B cell (primary cell): ENCODE measurements at regions of chr2 and their contacts with region 1.

Region 1: DNA sequence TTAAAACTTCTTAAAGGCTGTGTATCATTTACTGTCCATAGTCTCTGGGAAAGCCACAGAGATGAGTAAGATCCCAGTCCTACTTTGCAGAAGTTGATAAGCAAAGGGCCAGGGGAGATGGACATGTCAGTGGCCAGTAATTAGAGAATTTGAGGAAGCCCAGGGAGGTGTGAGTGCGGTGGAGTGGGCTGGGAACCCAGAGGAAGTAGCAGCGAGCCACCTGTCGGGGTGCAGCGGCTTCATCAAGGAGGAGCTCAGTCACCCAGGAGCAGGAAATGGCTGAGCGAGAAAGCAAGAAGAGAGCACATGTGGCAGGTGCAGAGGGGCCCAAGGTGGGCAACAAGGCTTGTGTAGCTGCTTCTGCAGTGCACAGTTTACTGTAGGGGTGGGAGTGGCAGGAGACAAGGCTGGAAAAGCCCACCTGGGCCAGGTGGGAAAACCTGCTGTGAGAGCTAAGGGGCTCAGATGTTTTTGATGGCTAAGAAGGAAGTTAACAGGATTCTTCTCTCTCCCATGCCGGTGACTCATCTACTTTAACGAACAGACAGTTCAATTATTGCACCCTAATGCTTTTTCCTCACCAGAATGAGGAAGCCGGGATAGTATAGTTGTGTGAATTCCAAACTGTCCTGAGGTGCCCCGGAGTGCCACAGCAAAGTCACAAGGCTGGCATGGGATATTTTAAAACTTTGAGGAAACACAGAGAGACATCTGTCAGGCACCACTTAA is 34.8 kb upstream of the MGAT5 start:
- DNase-seq: peak; percentile 76
- ATAC-seq: peak; percentile 60
- H3K4me3 ChIP-seq: peak overlapping the region in 2 of 5 experiments; percentile 18 to 21
- H3K4me3 Mint-ChIP-seq: peak overlapping the region; percentile 67
- H3K27ac ChIP-seq: peak overlapping the region; percentile 74 to 84
- H3K27ac Mint-ChIP-seq: peak overlapping the region; percentile 91
- H3K4me1 ChIP-seq: peaks cover 52 to 55% of the 10 kb centered on the region in 2 donors
- H3K4me1 Mint-ChIP-seq: peaks cover 77% of the 10 kb centered on the region
- H3K27me3 ChIP-seq: no peaks in the 10 kb centered on the region
- H3K27me3 Mint-ChIP-seq: no peaks in the 10 kb centered on the region
- CTCF ChIP-seq: no peak

Region 2: DNA sequence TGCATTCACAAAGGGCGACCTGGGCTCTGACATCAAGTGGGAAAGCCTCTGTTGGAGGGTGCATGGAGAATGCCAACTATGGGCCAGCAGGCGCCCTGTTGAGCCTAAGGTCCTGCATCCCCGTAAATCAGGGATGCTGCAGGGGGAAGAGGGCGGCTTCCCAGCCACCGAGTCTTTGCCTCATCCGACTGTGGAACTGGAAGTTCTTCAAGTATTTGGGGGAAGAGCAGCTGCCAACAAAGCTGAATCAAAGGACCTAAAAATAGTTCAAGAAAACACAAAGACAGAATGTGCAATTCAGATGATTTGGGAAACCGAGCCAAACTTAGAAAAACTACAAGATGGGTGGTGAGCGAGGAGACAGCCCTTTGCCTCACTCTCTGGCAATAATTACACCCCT is 246.3 kb before region 1 on chr2:
- CTCF ChIA-PET with region 1: no interaction called
- POLR2A ChIA-PET with region 1: no interaction called
- intact Hi-C with region 1: no loop called
- DNase-seq: no peak
- ATAC-seq: no peak
- H3K4me3 ChIP-seq: no peak overlapping the region
- H3K4me3 Mint-ChIP-seq: no peak overlapping the region
- H3K27ac ChIP-seq: no peak overlapping the region
- H3K27ac Mint-ChIP-seq: no peak overlapping the region
- H3K4me1 ChIP-seq: peaks cover 27 to 29% of the 10 kb centered on the region in 2 donors
- H3K4me1 Mint-ChIP-seq: peaks cover 38% of the 10 kb centered on the region
- H3K27me3 ChIP-seq: no peaks in the 10 kb centered on the region
- H3K27me3 Mint-ChIP-seq: peaks cover 13% of the 10 kb centered on the region
- CTCF ChIP-seq: no peak

Region 3: GRCh38 chr2:134232868-134233727 is 14.0 kb after region 1 on chr2:
- CTCF ChIA-PET with region 1: interaction called, 9 read pairs
- POLR2A ChIA-PET with region 1: no interaction called
- intact Hi-C with region 1: loop called (anchors 1 kb)
- DNase-seq: peak; percentile 63
- ATAC-seq: peak; percentile 31
- H3K4me3 ChIP-seq: peak overlapping the region in 3 of 5 experiments; percentile 7 to 48 (median 30)
- H3K4me3 Mint-ChIP-seq: peak overlapping the region; percentile 55
- H3K27ac ChIP-seq: peak overlapping the region; percentile 63 to 79
- H3K27ac Mint-ChIP-seq: peak overlapping the region; percentile 87
- H3K4me1 ChIP-seq: peaks cover 76% of the 10 kb centered on the region in 2 donors
- H3K4me1 Mint-ChIP-seq: peaks cover 88% of the 10 kb centered on the region
- H3K27me3 ChIP-seq: no peaks in the 10 kb centered on the region
- H3K27me3 Mint-ChIP-seq: no peaks in the 10 kb centered on the region
- CTCF ChIP-seq: no peak